T-cell (primary cell): ENCODE measurements at regions of chr1 and their contacts with region 1.

Region 1: GRCh38 chr1:185096531-185096930 is 51.2 kb downstream of the RNF2 start:
- DNase-seq: no peak
- ATAC-seq: no peak
- H3K4me3 ChIP-seq: no peak overlapping the region
- H3K4me3 Mint-ChIP-seq: no peak overlapping the region
- H3K27ac ChIP-seq: no peak overlapping the region
- H3K27ac Mint-ChIP-seq: no peak overlapping the region
- H3K4me1 ChIP-seq: no peaks in the 10 kb centered on the region
- H3K4me1 Mint-ChIP-seq: no peaks in the 10 kb centered on the region
- H3K27me3 ChIP-seq: no peaks in the 10 kb centered on the region
- H3K27me3 Mint-ChIP-seq: no peaks in the 10 kb centered on the region

Region 2: DNA sequence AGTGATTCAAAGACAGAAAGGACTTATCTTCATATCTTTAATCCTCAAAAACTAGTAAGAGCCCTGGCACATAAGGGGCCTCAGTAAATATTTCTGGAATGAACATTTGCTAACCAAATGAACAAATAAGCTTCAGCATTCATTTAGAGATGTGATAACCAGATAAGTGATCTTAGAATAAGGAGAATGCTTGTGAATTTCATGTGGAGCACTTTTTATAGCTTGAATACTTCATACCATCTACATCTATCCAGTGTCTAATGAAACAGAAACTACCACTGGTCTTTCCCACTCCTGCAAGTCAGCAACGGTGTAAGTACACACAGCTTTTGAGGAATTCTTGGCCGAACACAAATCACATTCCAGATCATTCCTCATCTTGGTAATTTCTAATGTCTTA is 380.4 kb before region 1 on chr1:
- CTCF ChIA-PET with region 1: no interaction called
- POLR2A ChIA-PET with region 1: interaction called in 1 of 2 experiments, 10 read pairs
- DNase-seq: no peak
- ATAC-seq: no peak
- H3K4me3 ChIP-seq: no peak overlapping the region
- H3K4me3 Mint-ChIP-seq: no peak overlapping the region
- H3K27ac ChIP-seq: no peak overlapping the region
- H3K27ac Mint-ChIP-seq: no peak overlapping the region
- H3K4me1 ChIP-seq: no peaks in the 10 kb centered on the region
- H3K4me1 Mint-ChIP-seq: peaks cover 0 to 3% (median 0%) of the 10 kb centered on the region in 3 donors
- H3K27me3 ChIP-seq: no peaks in the 10 kb centered on the region
- H3K27me3 Mint-ChIP-seq: no peaks in the 10 kb centered on the region